Mammary epithelial cell (primary cell): ENCODE measurements at regions of chr1 and their contacts with region 1.

Region 1: GRCh38 chr1:2586154-2587070 is at the start of gene PRXL2B:
- DNase-seq: peak; percentile 99
- H3K4me3 ChIP-seq: peak within 1 kb of the TSS; percentile 75 to 91 (median 78)
- H3K27ac ChIP-seq: peak within 1 kb of the TSS; percentile 35
- H3K4me1 ChIP-seq: peaks cover 11% of the 10 kb centered on the region
- H3K27me3 ChIP-seq: no peaks in the 10 kb centered on the region
- CTCF ChIP-seq: no peak
- total RNA-seq, gene PRXL2B: 15.7 to 29.1 TPM

Region 2: DNA sequence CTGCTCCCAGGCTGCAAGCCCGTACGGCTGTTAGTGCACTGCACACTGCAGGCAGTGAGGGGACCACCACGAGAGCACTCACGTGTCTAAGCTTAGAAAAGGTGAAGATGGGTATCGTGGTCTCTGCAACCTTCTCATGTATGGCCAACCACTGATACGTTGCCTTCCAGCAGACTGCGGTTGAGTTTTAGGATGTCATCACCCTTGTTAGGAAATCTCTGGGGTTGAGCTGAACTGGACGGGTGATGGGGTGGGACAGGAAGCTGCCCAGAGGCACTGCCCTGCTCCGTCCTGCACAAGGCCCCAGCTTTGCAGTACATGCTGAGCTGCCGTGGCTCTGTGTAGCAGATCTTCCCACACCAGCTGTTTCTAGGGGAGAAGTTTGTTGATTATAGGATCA is 435.2 kb before region 1 on chr1:
- CTCF ChIA-PET with region 1: no interaction called
- dilution Hi-C with region 1: loop called (anchors 10 kb)
- in situ Hi-C with region 1: no loop called
- intact Hi-C with region 1: no loop called
- DNase-seq: no peak
- H3K4me3 ChIP-seq: no peak overlapping the region
- H3K27ac ChIP-seq: no peak overlapping the region
- H3K4me1 ChIP-seq: no peaks in the 10 kb centered on the region
- H3K27me3 ChIP-seq: no peaks in the 10 kb centered on the region
- CTCF ChIP-seq: no peak

Region 3: GRCh38 chr1:2494323-2494693 is 92.1 kb before region 1 on chr1:
- CTCF ChIA-PET with region 1: no interaction called
- dilution Hi-C with region 1: loop called (anchors 5 kb)
- in situ Hi-C with region 1: no loop called
- intact Hi-C with region 1: no loop called
- DNase-seq: peak; percentile 97
- H3K4me3 ChIP-seq: no peak overlapping the region
- H3K27ac ChIP-seq: no peak overlapping the region
- H3K4me1 ChIP-seq: peaks cover 23% of the 10 kb centered on the region
- H3K27me3 ChIP-seq: no peaks in the 10 kb centered on the region
- CTCF ChIP-seq: no peak

Region 4: GRCh38 chr1:2525920-2526823 is 60.2 kb before region 1 on chr1 and contains the start of gene PANK4:
- CTCF ChIA-PET with region 1: no interaction called
- dilution Hi-C with region 1: loop called (anchors 5 kb)
- in situ Hi-C with region 1: no loop called
- intact Hi-C with region 1: no loop called
- DNase-seq: peak; percentile 90
- H3K4me3 ChIP-seq: peak within 1 kb of the TSS; percentile 70 to 98 (median 94)
- H3K27ac ChIP-seq: peak within 1 kb of the TSS; percentile 65
- H3K4me1 ChIP-seq: peaks cover 43% of the 10 kb centered on the region
- H3K27me3 ChIP-seq: peaks cover 4% of the 10 kb centered on the region
- CTCF ChIP-seq: no peak
- total RNA-seq, gene PANK4: 14.2 to 28.5 TPM

Region 5: DNA sequence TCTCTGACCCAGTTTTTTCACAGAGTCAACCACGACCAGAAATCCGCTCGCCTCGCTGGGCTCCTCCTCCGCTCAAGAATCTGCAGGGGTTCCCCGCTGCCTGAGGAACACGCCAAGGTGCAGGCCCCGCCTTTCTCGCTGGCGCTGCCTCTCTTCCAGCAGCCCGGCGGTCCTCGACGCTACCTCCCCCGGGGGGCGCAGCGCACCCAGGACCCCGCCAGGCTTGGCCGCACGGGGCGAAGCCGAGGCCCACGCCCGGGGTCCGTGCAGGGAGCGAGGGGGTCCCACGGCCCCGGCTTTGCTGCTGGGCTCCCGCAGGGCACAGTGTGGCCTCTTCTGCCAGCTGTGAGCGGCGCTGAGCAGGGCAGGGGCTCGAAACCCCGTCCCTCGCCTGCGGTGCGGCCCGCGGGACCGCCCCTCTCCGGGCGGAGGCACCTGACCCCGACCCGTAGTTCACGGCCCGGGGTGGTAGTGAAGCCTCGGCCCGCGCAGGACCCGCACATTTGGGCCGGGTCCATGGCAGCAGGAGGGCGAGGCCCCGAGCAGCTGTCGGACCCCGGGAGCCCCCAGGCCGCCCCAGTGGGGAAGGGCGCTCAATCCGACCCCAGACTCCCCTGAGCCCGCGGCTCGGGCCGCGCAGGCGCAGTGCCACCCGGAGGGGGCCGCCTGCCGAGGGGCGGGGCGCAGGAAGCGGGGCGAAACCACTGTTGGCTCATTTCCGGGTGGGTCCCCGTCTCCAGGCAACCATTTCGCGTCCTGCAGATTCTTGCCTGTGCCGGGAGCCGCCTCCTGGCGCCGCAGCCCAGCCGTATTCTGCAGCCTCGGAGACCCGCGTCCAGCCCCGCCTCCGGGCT is 56.4 kb after region 1 on chr1:
- CTCF ChIA-PET with region 1: no interaction called
- dilution Hi-C with region 1: no loop called
- in situ Hi-C with region 1: no loop called
- intact Hi-C with region 1: loop called (anchors 2 kb)
- DNase-seq: peak; percentile 77
- H3K4me3 ChIP-seq: peak overlapping the region; percentile 64 to 91 (median 69)
- H3K27ac ChIP-seq: peak overlapping the region; percentile 61
- H3K4me1 ChIP-seq: peaks cover 18% of the 10 kb centered on the region
- H3K27me3 ChIP-seq: no peaks in the 10 kb centered on the region
- CTCF ChIP-seq: no peak

Region 6: GRCh38 chr1:3431266-3431665 is 844.9 kb after region 1 on chr1:
- CTCF ChIA-PET with region 1: no interaction called
- dilution Hi-C with region 1: no loop called
- in situ Hi-C with region 1: loop called in 1 of 2 experiments (anchors 25 kb)
- intact Hi-C with region 1: no loop called
- DNase-seq: no peak
- H3K4me3 ChIP-seq: no peak overlapping the region
- H3K27ac ChIP-seq: no peak overlapping the region
- H3K4me1 ChIP-seq: no peaks in the 10 kb centered on the region
- H3K27me3 ChIP-seq: peaks cover 3% of the 10 kb centered on the region
- CTCF ChIP-seq: peak in 1 of 2 donors; percentile 14

Region 7: DNA sequence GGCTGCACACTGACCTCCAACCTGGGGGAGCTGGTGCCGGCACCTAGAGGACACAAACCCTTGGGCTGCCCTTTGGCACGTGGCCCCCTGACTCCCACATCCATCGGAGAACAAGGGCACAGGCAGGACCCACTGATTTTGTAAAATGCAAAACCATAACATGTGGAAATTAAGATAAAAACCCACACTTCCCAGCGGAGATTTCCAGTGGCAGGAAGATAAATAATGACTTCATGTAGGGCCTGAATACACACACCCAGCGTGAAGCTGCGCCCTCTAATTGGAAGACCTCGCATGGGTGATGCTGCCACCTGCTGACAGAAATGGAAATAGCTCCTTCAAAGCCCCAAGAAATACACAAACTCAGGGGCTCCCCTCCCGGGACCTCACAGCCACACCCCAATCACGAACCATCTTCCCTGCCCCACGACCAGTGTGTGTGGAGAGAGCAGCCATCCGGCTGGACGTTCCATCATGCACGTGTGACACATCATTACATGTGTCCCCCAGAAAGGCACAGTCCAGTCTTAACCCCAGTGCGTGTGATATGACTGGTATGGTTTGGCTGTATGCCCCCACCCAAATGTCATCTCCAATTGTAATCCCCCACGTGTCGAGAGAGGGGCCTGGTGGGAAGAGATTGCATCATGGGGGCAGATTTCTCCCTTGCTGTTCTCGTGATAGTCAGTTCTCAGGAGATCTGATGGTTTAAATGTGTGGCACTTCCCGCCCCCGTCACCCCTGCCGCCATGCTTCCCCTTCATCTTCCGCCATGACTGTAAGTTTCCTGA is 1032.7 kb after region 1 on chr1:
- CTCF ChIA-PET with region 1: interaction called, 10 read pairs
- dilution Hi-C with region 1: no loop called
- in situ Hi-C with region 1: no loop called
- intact Hi-C with region 1: no loop called
- DNase-seq: peak; percentile 48
- H3K4me3 ChIP-seq: no peak overlapping the region
- H3K27ac ChIP-seq: no peak overlapping the region
- H3K4me1 ChIP-seq: peaks cover 9% of the 10 kb centered on the region
- H3K27me3 ChIP-seq: no peaks in the 10 kb centered on the region
- CTCF ChIP-seq: peak; percentile 70 to 80